HEK293T (cell line): ENCODE measurements at regions of chr5 and their contacts with region 1.

Region 1: GRCh38 chr5:135551593-135552447 is 16.1 kb upstream of the NEUROG1 start:
- DNase-seq: peak; percentile 79

Region 2: DNA sequence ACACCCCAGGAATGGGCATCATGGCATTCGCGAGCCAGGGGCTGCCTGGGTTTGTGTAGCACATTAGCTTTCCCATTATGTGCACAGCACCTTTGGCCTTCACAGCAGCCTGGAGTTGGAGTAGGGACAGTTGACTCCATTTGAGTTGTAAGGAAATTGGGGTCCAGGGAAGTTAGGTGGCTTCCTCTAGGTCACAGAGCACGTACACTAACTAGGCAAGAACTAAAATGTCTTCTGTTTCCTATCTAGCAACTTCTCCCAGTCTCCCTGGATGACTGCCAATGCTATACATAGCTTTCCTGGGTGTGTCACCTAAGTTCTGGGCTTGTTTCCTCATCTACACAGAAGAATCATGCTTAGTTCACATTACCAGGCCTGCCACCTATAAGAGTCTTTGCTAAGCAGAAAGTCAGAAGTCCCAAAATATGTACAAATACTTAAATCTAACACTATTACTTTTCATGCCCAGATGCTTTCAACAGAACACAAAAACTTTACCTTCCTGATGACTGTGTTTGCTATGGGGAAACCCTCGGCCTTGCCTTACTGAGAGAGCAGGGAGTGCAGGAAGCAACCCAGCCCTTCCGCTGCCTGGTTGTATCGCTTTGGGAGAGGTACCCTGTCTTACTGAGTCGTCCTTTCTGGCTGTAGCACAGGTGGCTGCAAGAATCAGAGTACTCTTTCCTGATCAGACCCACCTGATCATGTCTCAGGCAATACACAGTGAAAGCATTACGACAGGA is 164.8 kb before region 1 on chr5:
- CTCF ChIA-PET with region 1: no interaction called
- POLR2A ChIA-PET with region 1: no interaction called
- DNase-seq: no peak

Region 3: DNA sequence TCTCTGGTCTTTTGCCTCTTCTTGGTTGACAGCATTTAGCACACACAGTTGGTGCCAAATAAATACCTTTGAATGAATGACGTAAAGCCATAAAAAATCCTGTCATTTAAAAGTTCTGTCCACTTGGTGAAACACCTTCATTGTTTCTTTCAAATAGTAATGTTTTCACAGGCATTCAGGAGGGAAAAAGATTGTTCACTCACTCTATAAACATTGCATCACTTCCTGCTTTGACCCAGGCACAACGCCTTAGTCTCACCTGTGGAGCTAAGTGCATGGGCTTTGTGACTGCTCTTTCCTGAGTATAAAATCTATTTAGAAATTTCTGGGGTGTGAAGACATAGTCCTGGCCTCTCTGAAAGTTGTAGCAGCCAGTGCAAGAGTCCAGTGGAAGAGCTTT is 115.9 kb after region 1 on chr5:
- CTCF ChIA-PET with region 1: no interaction called
- POLR2A ChIA-PET with region 1: no interaction called
- DNase-seq: no peak

Region 4: GRCh38 chr5:135829681-135830383 is 278.0 kb after region 1 on chr5:
- CTCF ChIA-PET with region 1: interaction called, 19 read pairs
- POLR2A ChIA-PET with region 1: interaction called, 6 read pairs
- DNase-seq: peak; percentile 82

Region 5: DNA sequence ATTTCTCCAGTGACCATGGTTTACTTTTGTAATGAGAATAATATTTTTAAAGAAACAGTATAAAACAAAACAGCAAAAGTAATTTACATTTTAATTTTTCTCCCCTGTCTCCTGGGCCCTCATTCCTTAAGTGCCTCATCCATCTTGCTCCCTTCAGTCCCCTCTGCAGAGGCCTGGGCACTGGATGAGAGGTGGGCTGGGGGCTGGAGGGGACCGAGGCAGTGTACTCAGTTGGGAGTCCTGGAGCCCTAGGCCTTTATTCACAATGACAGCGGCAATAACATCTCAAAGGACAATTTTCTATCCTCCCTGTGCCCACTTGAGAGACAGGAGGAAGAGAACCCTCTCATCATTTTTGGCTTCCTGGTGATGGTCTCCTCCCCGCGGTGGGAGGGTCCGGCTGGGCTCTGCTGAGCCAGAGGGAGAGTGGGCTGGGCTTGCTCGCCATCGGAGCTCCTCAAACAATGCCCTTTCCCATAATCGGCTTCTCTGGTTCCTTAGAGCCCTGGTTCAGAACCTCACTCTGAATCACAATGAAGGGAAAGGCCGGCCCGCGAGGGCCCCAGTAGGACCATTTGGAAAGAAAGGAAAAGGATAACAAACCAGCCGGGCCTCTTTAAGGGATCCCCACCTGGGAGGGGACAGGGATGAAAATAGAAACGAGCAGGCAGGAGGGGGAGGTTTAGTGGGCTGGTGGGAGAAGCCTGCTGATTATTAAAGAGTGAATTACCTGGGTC is 650.8 kb after region 1 on chr5:
- CTCF ChIA-PET with region 1: no interaction called
- POLR2A ChIA-PET with region 1: no interaction called
- DNase-seq: no peak